Activated B cell treated with CpG ODN at 0.5 μM for 24 hours (primary cell): ENCODE measurements at regions of chr3 and their contacts with region 1.

Region 1: DNA sequence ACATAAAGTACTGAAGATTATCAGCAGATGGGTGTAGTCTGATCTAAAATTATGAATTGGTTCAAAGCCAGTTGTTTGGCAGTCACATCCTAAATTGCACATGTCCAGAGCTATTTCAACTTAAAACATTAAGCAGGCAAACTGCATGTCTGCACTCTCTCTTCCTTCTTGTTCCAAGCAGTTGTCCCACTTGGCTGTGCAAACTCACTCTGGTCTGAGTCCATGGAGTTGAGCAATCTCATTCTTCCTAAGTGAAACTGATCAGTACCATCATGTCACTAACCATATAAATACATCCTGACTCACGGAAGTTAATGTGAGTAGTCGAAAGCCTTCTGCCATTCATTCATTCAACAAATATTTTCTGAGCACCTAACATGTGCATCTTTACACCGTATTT is 353.0 kb downstream of the ROBO1 start:
- DNase-seq: no peak
- ATAC-seq: no peak
- H3K4me3 Mint-ChIP-seq: no peak overlapping the region
- H3K27ac Mint-ChIP-seq: no peak overlapping the region
- H3K4me1 Mint-ChIP-seq: no peaks in the 10 kb centered on the region
- H3K27me3 Mint-ChIP-seq: no peaks in the 10 kb centered on the region
- CTCF ChIP-seq: no peak

Region 2: DNA sequence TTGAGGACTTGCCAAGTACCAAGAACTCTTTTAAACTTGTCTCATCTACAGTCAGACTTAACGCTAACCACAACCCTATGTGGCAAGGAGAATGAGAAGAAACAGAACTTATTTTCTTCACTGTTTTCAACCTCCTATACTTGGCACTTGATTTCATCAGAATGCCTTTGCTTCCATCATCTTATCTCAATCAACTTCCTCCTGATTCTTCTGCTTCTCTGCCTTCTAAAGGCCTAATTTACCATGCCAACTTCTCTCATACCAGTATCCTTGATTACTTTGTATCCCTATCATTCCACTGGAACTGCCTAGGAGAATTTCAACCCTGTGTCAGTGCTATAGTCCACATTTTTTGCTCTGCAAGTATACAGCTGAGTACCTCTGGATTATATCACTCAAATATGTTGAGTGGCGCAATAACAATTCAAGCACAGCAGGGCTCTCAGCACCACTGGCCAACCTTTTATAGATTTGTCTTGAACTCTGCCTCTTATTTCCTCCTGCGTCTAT is 60.6 kb before region 1 on chr3:
- CTCF ChIA-PET with region 1: no interaction called
- POLR2A ChIA-PET with region 1: no interaction called
- intact Hi-C with region 1: loop called (anchors 10 kb)
- DNase-seq: no peak
- ATAC-seq: no peak
- H3K4me3 Mint-ChIP-seq: no peak overlapping the region
- H3K27ac Mint-ChIP-seq: no peak overlapping the region
- H3K4me1 Mint-ChIP-seq: no peaks in the 10 kb centered on the region
- H3K27me3 Mint-ChIP-seq: no peaks in the 10 kb centered on the region
- CTCF ChIP-seq: no peak

Region 3: GRCh38 chr3:79427081-79427480 is 12.3 kb after region 1 on chr3:
- CTCF ChIA-PET with region 1: no interaction called
- POLR2A ChIA-PET with region 1: no interaction called
- intact Hi-C with region 1: no loop called
- DNase-seq: no peak
- ATAC-seq: no peak
- H3K4me3 Mint-ChIP-seq: no peak overlapping the region
- H3K27ac Mint-ChIP-seq: no peak overlapping the region
- H3K4me1 Mint-ChIP-seq: no peaks in the 10 kb centered on the region
- H3K27me3 Mint-ChIP-seq: no peaks in the 10 kb centered on the region
- CTCF ChIP-seq: no peak